Cardiac septum (tissue), 1 donor: ENCODE measurements at regions of chr3 and their contacts with region 1.

Region 1: DNA sequence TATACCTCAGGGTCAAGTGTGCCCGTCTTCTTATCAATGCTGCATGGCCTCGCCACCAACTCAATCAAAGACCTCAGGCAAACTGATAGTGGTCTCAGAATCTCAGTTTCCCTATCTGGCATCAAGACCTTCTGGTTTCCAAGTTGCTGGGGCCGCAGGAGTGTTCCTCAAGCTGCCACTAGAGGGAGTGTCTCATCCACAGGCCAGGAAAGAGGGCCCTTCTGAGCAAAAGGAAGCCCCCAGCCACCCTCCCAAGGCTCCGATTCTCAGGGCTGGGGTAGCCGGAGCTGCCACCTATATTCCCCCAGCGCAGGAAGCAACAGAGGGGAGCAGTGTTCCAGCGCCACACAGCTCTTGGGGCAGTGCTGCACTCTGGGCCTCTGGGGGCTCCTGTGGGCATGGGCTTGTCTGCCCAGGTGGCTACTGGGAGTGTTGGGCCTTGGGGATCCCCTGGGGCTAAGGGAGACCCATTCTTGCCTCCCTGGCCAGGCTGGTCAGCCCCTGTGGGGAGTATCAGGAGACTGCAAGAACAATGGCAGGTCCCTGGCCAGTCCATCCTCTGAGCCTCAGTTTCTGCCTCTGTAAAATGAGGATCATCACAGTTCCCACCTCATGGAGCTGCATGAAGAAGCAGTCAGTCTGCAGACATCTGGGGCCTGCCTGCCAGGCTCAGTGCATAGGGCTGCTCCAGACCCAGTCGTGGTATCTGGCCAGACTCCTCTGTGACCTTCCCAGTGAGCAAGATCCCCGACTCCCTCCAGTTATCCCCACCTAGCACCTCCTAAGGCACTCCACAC is 23.4 kb upstream of the SEC13 start:
- DNase-seq: no peak

Region 2: DNA sequence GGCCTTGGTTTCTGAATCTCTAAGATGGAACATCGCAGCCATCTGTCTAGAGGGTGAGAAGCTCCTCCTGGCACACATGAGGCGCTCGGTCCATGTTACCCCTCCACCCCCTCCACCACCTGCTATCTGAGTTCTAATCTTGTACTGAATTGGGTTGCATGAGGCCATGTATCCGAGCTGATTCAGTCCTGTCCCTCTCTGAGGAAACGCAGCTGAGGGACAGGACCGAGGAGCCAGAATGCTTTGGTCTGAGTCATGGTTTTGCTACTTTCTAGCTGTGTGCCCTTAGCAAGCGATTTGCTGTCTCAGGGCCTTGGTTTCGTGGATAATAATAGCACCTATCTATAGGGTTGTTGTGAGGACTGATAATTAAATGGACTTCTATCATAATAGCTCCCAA is 64.3 kb after region 1 on chr3:
- intact Hi-C with region 1: no loop called
- DNase-seq: no peak

Region 3: DNA sequence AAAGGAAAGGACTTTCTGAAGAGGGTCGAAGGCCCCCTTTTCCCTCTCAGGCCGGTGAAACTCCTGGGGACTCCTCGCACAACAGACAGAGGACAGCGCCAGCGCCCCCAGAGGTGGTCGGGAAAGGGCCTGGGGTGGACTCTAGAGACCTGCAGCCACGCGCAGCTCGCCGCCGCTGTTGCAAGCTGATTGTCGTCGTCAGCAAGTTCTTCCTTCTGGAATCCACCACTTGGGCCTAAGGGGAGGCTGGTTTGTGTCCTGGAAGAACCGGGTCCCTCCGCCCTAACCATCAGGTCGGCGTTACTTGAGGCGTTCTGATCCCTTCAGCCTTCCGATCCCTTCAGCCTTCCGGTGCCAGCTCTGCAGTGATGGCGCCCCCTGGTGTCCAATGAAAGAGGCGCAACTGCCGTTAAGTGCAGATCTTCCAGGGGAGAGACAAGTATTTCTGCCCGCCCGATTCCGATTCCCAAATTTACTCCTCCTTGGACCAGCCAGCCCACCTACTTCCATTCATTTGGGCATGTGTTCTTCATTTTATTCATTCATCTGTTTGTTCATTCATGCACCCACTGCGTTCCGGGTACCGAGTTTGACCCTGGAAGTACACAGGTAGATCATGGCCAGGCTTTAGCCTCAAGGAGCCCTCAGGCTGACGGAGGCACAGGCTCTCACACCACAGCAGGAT is 394.5 kb after region 1 on chr3:
- intact Hi-C with region 1: loop called (anchors 1 kb)
- DNase-seq: peak; percentile 85